Activated CD4-positive, alpha-beta memory T cell treated with anti-CD3 and anti-CD28 coated beads for 36 hours (primary cell): ENCODE measurements at regions of chr21 and their contacts with region 1.

Region 1: GRCh38 chr21:35051287-35051818 is 2.3 kb upstream of the RUNX1 start:
- DNase-seq: peak; percentile 91
- H3K4me3 Mint-ChIP-seq: peak overlapping the region; percentile 36
- H3K27ac Mint-ChIP-seq: peak overlapping the region; percentile 99
- H3K4me1 Mint-ChIP-seq: peaks cover 53% of the 10 kb centered on the region
- H3K27me3 Mint-ChIP-seq: no peaks in the 10 kb centered on the region

Region 2: GRCh38 chr21:34807146-34807880 is 244.0 kb before region 1 on chr21:
- CTCF ChIA-PET with region 1: interaction called, 3 read pairs
- POLR2A ChIA-PET with region 1: no interaction called
- intact Hi-C with region 1: loop called (anchors 1 kb)
- DNase-seq: peak; percentile 85
- H3K4me3 Mint-ChIP-seq: peak overlapping the region; percentile 57
- H3K27ac Mint-ChIP-seq: peak overlapping the region; percentile 89
- H3K4me1 Mint-ChIP-seq: peaks cover 89% of the 10 kb centered on the region
- H3K27me3 Mint-ChIP-seq: no peaks in the 10 kb centered on the region

Region 3: DNA sequence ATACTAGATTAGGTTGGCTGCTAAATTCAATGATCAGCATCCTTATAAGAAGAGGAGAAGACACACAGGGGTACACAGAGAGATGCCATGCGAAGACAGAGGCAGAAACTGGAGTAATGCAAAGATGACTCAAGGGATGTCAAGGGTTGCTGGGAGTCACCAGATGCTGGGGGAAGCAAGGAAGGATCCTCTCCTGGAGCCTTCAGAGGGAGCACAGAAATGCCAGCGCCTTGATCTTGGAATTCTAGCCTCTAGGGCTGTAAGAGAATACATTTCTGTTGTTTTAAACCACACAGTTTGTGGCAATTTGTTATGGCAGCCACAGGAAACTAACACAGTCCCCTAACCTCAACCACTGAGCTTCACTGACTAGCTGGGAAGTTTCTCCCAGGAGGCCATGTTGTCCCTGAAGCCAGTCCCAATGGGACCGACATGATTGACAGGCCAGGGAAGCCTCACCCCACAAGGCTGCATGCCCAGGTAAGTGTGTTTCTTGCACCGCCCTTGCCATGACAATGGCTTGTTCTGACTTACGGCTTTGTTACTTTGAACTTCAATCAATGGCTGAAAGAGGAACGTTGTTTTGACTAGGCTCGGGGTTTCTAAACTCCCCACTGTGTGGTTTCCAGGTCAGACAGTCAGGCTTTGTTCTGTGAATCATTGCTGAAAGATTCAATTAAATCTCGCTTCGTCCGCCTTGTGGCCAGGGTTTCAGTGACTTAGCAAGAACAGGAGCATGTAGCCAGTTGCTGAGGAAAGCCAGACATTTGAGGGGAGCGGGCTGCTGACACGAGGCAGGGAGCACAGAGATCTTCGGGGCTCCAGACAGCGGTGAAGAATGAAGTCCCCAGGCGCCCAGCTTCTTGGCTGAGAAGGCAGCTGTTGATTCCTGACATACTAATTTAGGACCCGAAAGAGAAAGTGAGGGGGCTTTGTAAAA is 64.5 kb before region 1 on chr21:
- CTCF ChIA-PET with region 1: interaction called, 19 read pairs
- POLR2A ChIA-PET with region 1: interaction called, 72 read pairs
- intact Hi-C with region 1: no loop called
- DNase-seq: peak; percentile 92
- H3K4me3 Mint-ChIP-seq: peak overlapping the region; percentile 67
- H3K27ac Mint-ChIP-seq: peak overlapping the region; percentile 90
- H3K4me1 Mint-ChIP-seq: peaks cover 95% of the 10 kb centered on the region
- H3K27me3 Mint-ChIP-seq: no peaks in the 10 kb centered on the region

Region 4: GRCh38 chr21:35084869-35085268 is 33.5 kb after region 1 on chr21:
- CTCF ChIA-PET with region 1: interaction called, 21 read pairs
- POLR2A ChIA-PET with region 1: interaction called, 44 read pairs
- intact Hi-C with region 1: loop called (anchors 1 kb)
- DNase-seq: no peak
- H3K4me3 Mint-ChIP-seq: no peak overlapping the region
- H3K27ac Mint-ChIP-seq: no peak overlapping the region
- H3K4me1 Mint-ChIP-seq: peaks cover 39% of the 10 kb centered on the region
- H3K27me3 Mint-ChIP-seq: no peaks in the 10 kb centered on the region

Region 5: GRCh38 chr21:35226948-35227744 is 175.8 kb after region 1 on chr21:
- CTCF ChIA-PET with region 1: interaction called, 6 read pairs
- POLR2A ChIA-PET with region 1: interaction called, 4 read pairs
- intact Hi-C with region 1: loop called (anchors 2 kb)
- DNase-seq: peak; percentile 76
- H3K4me3 Mint-ChIP-seq: peak overlapping the region; percentile 49
- H3K27ac Mint-ChIP-seq: peak overlapping the region; percentile 62
- H3K4me1 Mint-ChIP-seq: peaks cover 38% of the 10 kb centered on the region
- H3K27me3 Mint-ChIP-seq: no peaks in the 10 kb centered on the region

Region 6: GRCh38 chr21:35528116-35529042 is 477.0 kb after region 1 on chr21:
- CTCF ChIA-PET with region 1: no interaction called
- POLR2A ChIA-PET with region 1: no interaction called
- intact Hi-C with region 1: loop called (anchors 5 kb)
- DNase-seq: peak; percentile 78
- H3K4me3 Mint-ChIP-seq: peak overlapping the region; percentile 80
- H3K27ac Mint-ChIP-seq: peak overlapping the region; percentile 84
- H3K4me1 Mint-ChIP-seq: peaks cover 48% of the 10 kb centered on the region
- H3K27me3 Mint-ChIP-seq: no peaks in the 10 kb centered on the region